Psoas muscle (tissue), 8 donors: ENCODE measurements at regions of chr21 and their contacts with region 1.

Region 1: GRCh38 chr21:29164325-29164942 is 34.0 kb downstream of the MAP3K7CL start:
- DNase-seq: no peak
- ATAC-seq: peak; percentile 63 to 90 (median 80)
- H3K4me3 ChIP-seq: no peak overlapping the region
- H3K27ac ChIP-seq: no peak overlapping the region
- H3K4me1 ChIP-seq: no peaks in the 10 kb centered on the region
- H3K27me3 ChIP-seq: no peaks in the 10 kb centered on the region
- CTCF ChIP-seq: peak; percentile 62

Region 2: GRCh38 chr21:28334407-28334806 is 830.0 kb before region 1 on chr21:
- intact Hi-C with region 1: no loop called
- DNase-seq: no peak
- ATAC-seq: no peak
- H3K4me3 ChIP-seq: no peak overlapping the region
- H3K27ac ChIP-seq: no peak overlapping the region
- H3K4me1 ChIP-seq: peaks cover 5% of the 10 kb centered on the region
- H3K27me3 ChIP-seq: no peaks in the 10 kb centered on the region
- CTCF ChIP-seq: no peak

Region 3: DNA sequence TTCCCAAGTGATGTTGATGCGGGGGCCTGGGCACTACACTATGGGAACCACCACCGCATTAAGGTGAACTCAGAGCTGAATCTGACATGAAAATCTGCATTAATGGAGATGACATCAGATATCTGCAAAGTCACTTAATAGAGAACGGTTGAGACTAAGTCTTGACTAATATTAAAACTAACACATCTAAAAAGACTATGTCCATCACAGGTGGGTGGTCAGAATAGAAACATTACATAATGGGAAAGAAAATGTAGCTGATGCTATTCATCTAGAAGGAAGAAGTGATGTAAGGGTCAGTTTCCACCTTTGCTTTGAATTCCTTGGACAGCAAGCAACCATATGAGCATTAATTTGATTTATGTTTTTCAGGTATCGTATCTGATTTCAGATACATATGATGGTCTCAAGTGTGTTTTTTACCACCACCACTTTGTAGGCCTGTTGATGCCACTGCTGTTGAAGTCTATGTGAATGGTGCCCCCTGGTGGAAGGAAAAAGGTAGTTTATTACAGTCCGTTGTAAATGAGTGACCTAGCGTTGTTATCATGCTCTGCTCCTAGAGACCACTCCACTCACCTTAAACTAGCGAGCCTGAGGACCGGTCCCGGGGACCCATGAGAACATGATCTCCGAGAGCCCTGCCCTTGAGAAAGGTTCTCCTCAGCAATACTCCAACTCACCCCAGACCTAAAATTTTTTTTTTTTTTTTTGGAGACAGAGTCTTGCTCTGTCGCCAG is 207.8 kb after region 1 on chr21:
- intact Hi-C with region 1: loop called (anchors 2 to 5 kb)
- DNase-seq: no peak
- ATAC-seq: peak; percentile 81 to 93 (median 86)
- H3K4me3 ChIP-seq: no peak overlapping the region
- H3K27ac ChIP-seq: peak overlapping the region; percentile 46
- H3K4me1 ChIP-seq: peaks cover 10% of the 10 kb centered on the region
- H3K27me3 ChIP-seq: no peaks in the 10 kb centered on the region
- CTCF ChIP-seq: peak; percentile 83

Region 4: DNA sequence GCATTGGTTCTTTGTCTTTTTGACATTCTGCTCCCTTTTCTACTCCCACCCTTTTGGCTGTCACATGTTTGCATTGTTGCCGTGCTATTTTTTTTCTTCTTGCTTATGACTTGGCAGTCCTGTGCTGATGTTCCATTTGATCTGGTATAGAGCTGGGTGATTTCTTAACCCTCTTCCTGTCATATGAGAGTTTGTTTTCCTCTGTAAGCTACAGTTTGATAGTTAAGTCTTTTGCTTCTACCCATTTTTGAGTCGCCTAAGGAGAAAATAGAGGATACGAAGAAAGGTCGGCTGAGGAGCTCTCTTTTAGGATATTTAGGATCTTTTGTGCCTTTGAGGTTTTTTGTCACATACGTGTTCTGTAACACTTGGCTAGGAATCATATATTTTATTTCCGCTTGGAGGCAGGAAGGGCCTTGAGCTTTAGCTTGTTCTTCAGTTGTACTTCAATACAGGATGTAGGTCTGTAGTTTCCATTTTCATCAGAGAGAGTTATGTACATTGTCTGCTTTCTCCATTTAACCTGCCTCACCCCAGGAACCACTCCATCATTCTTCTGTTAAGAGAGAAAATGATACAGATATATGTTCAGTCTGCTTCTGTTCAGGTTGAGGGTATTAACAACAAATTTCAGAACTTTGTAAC is 285.0 kb after region 1 on chr21:
- intact Hi-C with region 1: no loop called
- DNase-seq: no peak
- ATAC-seq: no peak
- H3K4me3 ChIP-seq: no peak overlapping the region
- H3K27ac ChIP-seq: no peak overlapping the region
- H3K4me1 ChIP-seq: no peaks in the 10 kb centered on the region
- H3K27me3 ChIP-seq: no peaks in the 10 kb centered on the region
- CTCF ChIP-seq: no peak